Activated T-helper 2 cell treated with anti-CD3 and anti-CD28 coated beads, Interferon-gamma antibody, Interleukin-2, Interleukin-4, amounts not matched to agents 10 μg/mL and 5 μg/mL and 100 μg/mL, durations not matched to agents 14 hours and 24 hours and 36 hours (primary cell): ENCODE measurements at regions of chr12 and their contacts with region 1.

Region 1: DNA sequence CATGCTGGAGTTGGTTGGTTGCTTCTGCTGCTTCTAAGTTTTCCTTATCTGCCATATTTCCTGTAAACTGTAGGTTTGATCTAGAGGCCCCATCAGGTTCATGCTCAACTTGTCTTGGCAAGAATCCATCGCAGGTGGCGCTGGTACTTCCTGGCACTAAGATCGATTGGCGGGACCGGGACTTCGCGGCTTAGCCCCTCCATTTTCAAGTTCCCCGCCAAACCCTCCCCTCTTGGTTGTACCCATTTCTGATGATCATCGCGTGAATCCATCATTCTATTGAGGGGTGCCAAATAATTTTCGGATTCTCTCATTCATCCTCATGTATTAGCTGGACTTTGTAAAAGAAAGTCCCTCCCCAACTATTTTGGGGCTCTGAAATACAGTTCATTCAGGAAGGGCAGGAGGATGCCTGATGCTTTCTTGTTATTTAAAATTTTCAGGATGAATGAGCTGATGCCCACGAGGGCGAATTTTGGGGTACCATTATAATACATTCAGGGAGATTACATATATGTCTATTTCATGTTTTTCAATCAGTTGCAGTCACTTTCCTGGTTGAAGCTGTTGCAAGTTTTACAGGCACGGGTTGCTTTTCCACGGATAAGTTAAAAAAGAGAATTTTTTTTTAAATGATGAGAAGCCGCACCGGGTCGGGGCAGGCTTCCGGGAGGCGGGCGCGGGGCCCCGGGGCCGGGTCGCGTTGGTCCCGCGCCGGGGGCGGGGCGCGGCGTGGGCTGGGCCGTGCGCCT is 395 bp upstream of the BRI3BP start:
- DNase-seq: peak; percentile 84
- H3K4me3 Mint-ChIP-seq: peak overlapping the region; percentile 88
- H3K27ac Mint-ChIP-seq: peak overlapping the region; percentile 93
- H3K4me1 Mint-ChIP-seq: peaks cover 30% of the 10 kb centered on the region
- H3K27me3 Mint-ChIP-seq: no peaks in the 10 kb centered on the region

Region 2: DNA sequence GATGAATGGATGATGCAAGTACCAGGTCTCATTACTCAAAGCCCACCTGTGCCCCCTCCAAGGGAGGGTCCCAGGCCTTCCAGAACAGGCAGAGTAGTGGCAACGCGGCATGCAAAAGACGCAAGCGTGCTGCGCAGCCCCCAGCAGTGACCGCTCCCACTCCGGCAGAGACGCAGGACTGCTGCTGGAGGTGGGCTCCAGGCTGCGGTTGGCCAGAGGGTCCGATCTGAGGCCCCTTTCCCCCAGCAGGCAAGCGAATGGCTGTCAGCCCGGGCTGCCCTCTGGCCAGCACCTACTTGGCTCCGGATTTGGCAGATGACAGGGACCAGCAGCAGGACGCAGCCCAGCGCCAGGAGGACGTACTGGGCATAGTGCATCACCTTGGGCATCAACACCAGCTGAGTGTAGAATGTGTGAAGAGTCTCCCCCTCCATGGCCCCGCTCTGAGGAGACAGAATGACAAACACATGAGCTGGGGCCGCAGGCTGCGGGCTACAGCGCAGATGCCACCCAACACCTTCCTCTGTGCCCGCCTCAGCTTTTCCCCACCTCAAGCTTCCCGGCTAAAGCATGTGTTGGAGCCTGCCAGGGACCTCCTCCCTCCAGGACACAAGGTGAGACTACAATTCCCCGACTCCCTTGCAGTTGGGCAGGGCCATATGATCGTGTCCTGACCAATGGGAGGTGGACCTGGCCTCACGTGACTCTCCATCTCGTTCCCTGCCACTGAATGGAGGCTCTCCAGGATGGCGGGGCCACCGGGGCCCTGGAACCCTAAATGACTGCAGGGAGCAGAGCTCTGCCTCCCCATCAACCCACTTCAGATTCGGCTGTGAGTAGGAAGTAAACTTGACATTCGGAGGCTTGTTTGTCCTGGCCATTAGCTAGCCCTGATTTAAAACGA is 206.7 kb before region 1 on chr12:
- intact Hi-C with region 1: no loop called
- DNase-seq: no peak
- H3K4me3 Mint-ChIP-seq: no peak overlapping the region
- H3K27ac Mint-ChIP-seq: no peak overlapping the region
- H3K4me1 Mint-ChIP-seq: no peaks in the 10 kb centered on the region
- H3K27me3 Mint-ChIP-seq: no peaks in the 10 kb centered on the region

Region 3: DNA sequence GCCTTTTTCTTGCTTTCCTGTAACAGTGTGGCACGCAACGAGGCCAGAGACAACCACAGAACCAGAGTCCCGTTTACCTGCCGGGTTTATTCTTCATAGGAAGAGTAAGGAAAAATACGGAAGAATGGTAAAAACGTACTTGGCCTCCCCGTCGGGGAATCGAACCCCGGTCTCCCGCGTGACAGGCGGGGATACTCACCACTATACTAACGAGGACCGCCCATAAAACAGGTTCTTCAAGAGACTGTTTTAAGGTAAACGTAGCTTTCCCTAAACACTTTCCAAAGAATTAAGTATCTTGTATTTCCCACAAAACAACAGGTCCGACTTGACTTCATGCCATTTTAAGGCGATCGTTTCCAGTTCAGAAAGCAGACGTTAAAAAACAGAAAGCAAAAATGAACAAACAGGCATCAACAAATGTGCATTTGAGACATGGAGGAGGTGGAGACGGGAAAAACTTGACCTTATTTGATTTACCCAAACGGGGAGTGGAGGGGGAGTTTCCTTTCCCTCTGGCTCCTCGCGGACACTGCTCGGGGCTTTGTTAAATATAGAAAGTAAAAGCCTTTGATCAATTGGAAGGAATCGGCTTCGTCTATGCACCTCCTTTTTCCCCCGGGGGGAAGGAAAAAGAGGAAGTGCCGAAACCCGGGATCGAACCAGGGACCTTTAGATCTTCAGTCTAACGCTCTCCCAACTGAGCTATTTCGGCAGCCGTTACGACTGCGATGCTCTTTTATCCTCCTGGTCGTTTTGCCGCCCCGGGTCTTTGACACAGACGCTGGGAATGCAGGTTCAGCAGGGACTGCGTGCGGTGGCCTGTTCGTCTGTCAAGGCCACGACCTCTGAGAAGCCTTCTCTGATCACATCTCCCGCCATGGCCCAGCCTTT is 65.6 kb before region 1 on chr12:
- intact Hi-C with region 1: no loop called
- DNase-seq: peak; percentile 90
- H3K4me3 Mint-ChIP-seq: peak overlapping the region; percentile 92
- H3K27ac Mint-ChIP-seq: peak overlapping the region; percentile 88
- H3K4me1 Mint-ChIP-seq: peaks cover 30% of the 10 kb centered on the region
- H3K27me3 Mint-ChIP-seq: peaks cover 3% of the 10 kb centered on the region

Region 4: DNA sequence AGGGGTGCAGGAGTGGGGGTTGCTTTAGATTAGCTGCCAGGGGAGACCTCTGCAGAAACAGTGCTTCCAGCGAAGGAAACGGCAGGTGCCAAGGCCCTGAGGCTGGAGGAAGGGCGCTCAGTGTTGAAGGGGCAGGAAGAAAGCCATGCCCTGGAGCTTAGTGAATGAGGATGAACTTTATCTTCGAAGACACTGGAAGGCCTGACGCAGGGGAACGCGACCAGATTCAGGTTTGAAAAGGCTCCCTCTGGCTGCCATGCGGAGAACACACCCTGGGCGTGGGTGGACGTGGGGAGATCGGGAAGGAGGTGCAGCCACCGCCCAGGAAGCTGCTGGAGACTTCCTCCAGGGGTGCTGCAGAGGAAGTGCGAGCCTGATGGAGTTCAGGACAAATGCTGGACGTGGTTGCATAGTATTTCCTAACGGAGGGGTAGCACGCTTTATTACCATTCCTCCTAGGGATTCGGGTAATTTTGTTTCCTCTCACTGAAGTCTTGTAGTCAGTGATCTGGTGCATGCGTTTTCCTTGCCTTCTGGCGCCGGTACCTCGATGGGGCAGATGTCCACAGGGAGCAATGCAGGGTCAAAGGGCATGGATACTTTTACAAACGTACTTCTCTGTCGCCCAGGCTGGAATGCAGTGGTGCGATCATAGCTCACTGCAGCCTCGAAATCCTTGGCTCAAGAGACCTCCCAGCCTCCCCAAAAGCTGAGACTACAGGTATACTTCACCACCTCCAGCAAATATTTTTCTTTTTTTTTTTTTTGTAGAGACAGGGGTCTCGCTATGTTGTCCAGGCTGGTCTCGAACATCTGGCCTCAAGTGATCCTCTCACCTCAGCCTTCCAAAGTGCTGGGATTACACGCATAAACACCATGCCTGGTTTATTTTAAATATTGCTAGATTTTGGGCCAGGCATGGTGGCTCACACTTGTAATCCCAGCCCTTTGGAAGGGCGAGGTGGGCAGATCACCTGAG is 52.2 kb before region 1 on chr12:
- intact Hi-C with region 1: loop called (anchors 1 kb)
- DNase-seq: peak; percentile 77
- H3K4me3 Mint-ChIP-seq: no peak overlapping the region
- H3K27ac Mint-ChIP-seq: no peak overlapping the region
- H3K4me1 Mint-ChIP-seq: peaks cover 13% of the 10 kb centered on the region
- H3K27me3 Mint-ChIP-seq: no peaks in the 10 kb centered on the region

Region 5: GRCh38 chr12:125049093-125049458 is 56.0 kb after region 1 on chr12:
- intact Hi-C with region 1: loop called (anchors 1 kb)
- DNase-seq: no peak
- H3K4me3 Mint-ChIP-seq: peak overlapping the region; percentile 86
- H3K27ac Mint-ChIP-seq: peak overlapping the region; percentile 53
- H3K4me1 Mint-ChIP-seq: peaks cover 9% of the 10 kb centered on the region
- H3K27me3 Mint-ChIP-seq: no peaks in the 10 kb centered on the region

Region 6: GRCh38 chr12:125065021-125065795 is 72.2 kb after region 1 on chr12 and contains the start of gene AACS:
- intact Hi-C with region 1: loop called (anchors 1 kb)
- DNase-seq: peak; percentile 63
- H3K4me3 Mint-ChIP-seq: peak within 1 kb of the TSS; percentile 87
- H3K27ac Mint-ChIP-seq: peak within 1 kb of the TSS; percentile 50
- H3K4me1 Mint-ChIP-seq: peaks cover 17% of the 10 kb centered on the region
- H3K27me3 Mint-ChIP-seq: peaks cover 6% of the 10 kb centered on the region
- total RNA-seq, gene AACS: 45.5 and 46.9 TPM in 2 replicates